ENCODE measurements at regions of chr12 and their contacts with region 1.

Region 1: GRCh38 chr12:76790564-76791552 is 26.9 kb downstream of the ZDHHC17 start:
- DNase-seq: no peak
- H3K4me3 Mint-ChIP-seq: no peak overlapping the region
- H3K27ac Mint-ChIP-seq: no peak overlapping the region
- H3K4me1 Mint-ChIP-seq: peaks cover 5% of the 10 kb centered on the region
- H3K27me3 Mint-ChIP-seq: no peaks in the 10 kb centered on the region

Region 2: GRCh38 chr12:76608075-76608474 is 182.8 kb before region 1 on chr12:
- intact Hi-C with region 1: no loop called
- DNase-seq: no peak
- H3K4me3 Mint-ChIP-seq: no peak overlapping the region
- H3K27ac Mint-ChIP-seq: no peak overlapping the region
- H3K4me1 Mint-ChIP-seq: no peaks in the 10 kb centered on the region
- H3K27me3 Mint-ChIP-seq: peaks cover 22% of the 10 kb centered on the region

Region 3: GRCh38 chr12:76706101-76706500 is 84.8 kb before region 1 on chr12:
- intact Hi-C with region 1: loop called (anchors 10 kb)
- DNase-seq: no peak
- H3K4me3 Mint-ChIP-seq: no peak overlapping the region
- H3K27ac Mint-ChIP-seq: no peak overlapping the region
- H3K4me1 Mint-ChIP-seq: no peaks in the 10 kb centered on the region
- H3K27me3 Mint-ChIP-seq: peaks cover 2% of the 10 kb centered on the region

Region 4: DNA sequence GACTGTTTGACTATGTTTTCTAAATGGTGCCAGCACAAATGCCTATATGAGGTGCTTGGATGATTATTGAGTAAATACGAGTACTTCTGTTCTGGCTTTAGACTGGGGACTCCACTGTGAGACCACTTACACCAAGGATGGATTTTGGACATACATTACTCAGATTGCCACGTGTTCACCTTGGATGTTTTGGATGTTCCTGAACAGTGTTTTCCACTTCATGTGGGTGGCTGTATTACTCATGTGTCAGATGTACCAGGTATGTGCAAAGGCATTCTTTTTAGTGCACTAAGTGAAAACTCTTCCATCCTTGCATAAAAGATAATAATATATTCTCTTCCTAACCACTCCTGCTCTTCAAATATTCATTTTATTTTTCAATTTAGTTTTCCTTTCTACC is 57.3 kb after region 1 on chr12:
- intact Hi-C with region 1: no loop called
- DNase-seq: no peak
- H3K4me3 Mint-ChIP-seq: no peak overlapping the region
- H3K27ac Mint-ChIP-seq: no peak overlapping the region
- H3K4me1 Mint-ChIP-seq: no peaks in the 10 kb centered on the region
- H3K27me3 Mint-ChIP-seq: no peaks in the 10 kb centered on the region